SK-N-SH (cell line): ENCODE measurements at regions of chr16 and their contacts with region 1.

Region 1: DNA sequence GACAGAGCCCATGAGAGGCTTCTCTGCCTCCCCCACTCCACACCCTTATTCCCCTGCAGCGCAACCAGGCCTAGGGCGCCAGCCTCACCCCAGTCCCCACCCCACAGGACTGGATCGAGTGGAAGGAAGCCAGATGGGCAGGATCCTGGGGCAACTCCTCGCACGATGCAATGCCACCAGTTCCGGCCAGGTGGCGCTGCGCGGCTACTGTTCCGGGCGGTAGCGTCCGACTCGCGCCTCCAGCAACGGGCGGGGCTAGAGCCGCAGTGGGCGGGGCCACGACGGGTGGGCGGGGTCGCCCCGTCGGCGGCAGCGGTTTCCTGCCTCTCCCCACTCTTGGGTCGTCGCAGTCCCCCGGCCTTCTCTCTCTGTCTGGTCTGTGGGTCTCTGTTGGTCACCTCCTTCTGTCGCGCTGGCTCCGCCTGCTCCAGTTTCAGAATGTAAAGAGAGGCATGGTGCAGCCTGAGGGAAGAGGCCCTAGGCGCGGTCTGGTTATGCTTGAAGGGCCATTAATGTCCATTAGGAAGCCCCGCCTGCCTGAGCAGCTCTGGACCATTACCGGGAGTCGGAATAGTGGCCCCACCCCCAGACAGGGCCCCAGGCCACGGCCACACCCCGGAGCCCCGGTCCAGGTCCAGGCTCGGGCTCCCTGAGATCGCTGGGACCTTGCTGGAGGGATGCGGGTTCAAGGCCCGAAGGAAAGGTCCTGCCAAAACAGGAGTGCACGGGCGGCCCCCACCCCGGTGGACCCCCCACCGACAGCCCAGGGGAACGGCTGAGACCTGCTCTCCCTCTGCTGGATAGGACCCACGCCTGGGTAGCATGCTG is 3.4 kb upstream of the NHERF2 start:
- DNase-seq: peak; percentile 97
- H3K4me3 ChIP-seq: peak overlapping the region; percentile 40 to 65
- H3K27ac ChIP-seq: peak overlapping the region; percentile 65 to 86
- H3K4me1 ChIP-seq: peaks cover 6 to 28% of the 10 kb centered on the region in 2 experiments; a peak in 2 of 4 replicates
- H3K27me3 ChIP-seq: peaks cover 4% of the 10 kb centered on the region; the same call in 1 of the 2 replicates
- CTCF ChIP-seq: peak; percentile 89
- EP300 ChIP-seq: no peak
- RAD21 ChIP-seq: peak; percentile 94

Region 2: GRCh38 chr16:2009789-2010510 is 13.4 kb before region 1 on chr16 and contains the start of gene ZNF598:
- CTCF ChIA-PET with region 1: interaction called, 25 read pairs
- POLR2A ChIA-PET with region 1: no interaction called
- DNase-seq: peak; percentile 98
- H3K4me3 ChIP-seq: peak within 1 kb of the TSS; percentile 90 to 91
- H3K27ac ChIP-seq: peak within 1 kb of the TSS; percentile 81 to 87
- H3K4me1 ChIP-seq: peaks cover 18 to 46% of the 10 kb centered on the region in 2 experiments; a peak in 3 of 4 replicates
- H3K27me3 ChIP-seq: no peaks in the 10 kb centered on the region
- CTCF ChIP-seq: no peak
- EP300 ChIP-seq: no peak
- RAD21 ChIP-seq: no peak
- polyA plus RNA-seq, gene ZNF598: 38.1 and 47.8 TPM in 2 replicates

Region 3: GRCh38 chr16:2047330-2048115 is 24.2 kb after region 1 on chr16 and contains the starts of genes NTHL1 and TSC2:
- CTCF ChIA-PET with region 1: interaction called, 43 read pairs
- POLR2A ChIA-PET with region 1: interaction called, 5 read pairs
- DNase-seq: peak; percentile 97
- H3K4me3 ChIP-seq: peak within 1 kb of the TSS; percentile 71 to 76
- H3K27ac ChIP-seq: peak within 1 kb of the TSS; percentile 33 to 69; a peak in 3 of 4 replicates
- H3K4me1 ChIP-seq: peaks cover 4 to 20% of the 10 kb centered on the region in 2 experiments; a peak in 3 of 4 replicates
- H3K27me3 ChIP-seq: no peaks in the 10 kb centered on the region
- CTCF ChIP-seq: peak; percentile 28; the same call in 1 of the 2 replicates
- EP300 ChIP-seq: no peak; a peak in 1 of 4 replicates
- RAD21 ChIP-seq: no peak; the same call in 1 of the 2 replicates
- polyA plus RNA-seq, gene NTHL1: 72.9 and 77.3 TPM in 2 replicates
- polyA plus RNA-seq, gene TSC2: 76.7 and 96.1 TPM in 2 replicates

Region 4: GRCh38 chr16:2147981-2148671 is 124.8 kb after region 1 on chr16 and contains the start of gene RAB26:
- CTCF ChIA-PET with region 1: interaction called, 31 read pairs
- POLR2A ChIA-PET with region 1: interaction called, 4 read pairs
- DNase-seq: peak; percentile 91
- H3K4me3 ChIP-seq: peak within 1 kb of the TSS; percentile 50 to 60
- H3K27ac ChIP-seq: peak within 1 kb of the TSS; percentile 33 to 80; a peak in 3 of 4 replicates
- H3K4me1 ChIP-seq: peaks cover 41 to 62% of the 10 kb centered on the region in 2 experiments; a peak in 3 of 4 replicates
- H3K27me3 ChIP-seq: no peaks in the 10 kb centered on the region
- CTCF ChIP-seq: no peak
- EP300 ChIP-seq: no peak
- RAD21 ChIP-seq: no peak
- polyA plus RNA-seq, gene RAB26: 14.3 and 19.5 TPM in 2 replicates

Region 5: DNA sequence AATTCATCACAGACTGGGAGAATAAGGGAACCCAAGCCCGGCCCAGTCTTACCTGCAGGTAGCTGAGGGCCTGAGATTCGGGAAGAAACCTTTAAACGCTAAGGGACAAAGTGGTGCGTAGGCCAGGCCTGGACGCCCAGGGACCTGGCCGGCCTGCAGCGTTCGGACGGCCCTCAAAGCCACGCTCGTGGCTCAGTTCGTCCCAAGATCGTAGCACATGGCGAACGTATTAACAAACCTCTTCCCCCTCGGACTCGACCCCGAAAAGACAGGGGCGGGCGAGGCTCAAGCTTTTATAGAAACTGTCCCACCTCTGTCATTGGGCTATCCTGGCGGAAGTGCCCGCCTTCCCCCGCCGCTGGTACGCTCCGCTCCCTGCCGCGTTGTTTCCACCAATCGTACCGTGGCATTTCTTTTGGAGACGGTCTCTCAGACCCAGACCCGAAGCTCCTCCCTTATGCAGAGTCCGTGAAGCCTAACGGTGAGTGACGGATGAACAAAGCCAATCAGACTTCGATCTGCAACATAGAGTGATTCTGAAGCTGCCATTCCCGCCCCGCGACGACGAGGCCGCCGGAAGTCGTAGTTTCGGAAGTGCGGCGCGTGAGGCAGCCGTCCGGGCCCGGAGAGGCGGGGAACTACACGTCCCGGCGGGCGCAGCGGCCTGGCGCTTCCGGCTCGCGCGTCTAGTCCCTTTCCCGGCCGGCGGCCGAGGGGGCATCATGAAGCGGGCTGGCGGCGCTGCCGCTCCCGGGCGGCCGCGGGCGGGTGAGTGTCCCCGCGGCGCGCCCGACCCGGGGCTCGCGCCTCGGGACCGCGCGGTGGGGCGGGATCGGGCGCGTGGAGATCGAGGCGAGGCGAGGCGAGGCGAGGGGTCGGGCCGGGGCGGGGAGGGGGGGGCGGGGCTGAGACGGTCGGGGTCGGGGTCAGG is 132.0 kb after region 1 on chr16 and contains the start of gene TRAF7:
- CTCF ChIA-PET with region 1: interaction called, 28 read pairs
- POLR2A ChIA-PET with region 1: interaction called, 10 read pairs
- DNase-seq: peak; percentile 96
- H3K4me3 ChIP-seq: peak within 1 kb of the TSS; percentile 100
- H3K27ac ChIP-seq: peak within 1 kb of the TSS; percentile 61 to 89; a peak in 3 of 4 replicates
- H3K4me1 ChIP-seq: peaks cover 37 to 67% of the 10 kb centered on the region in 2 experiments; a peak in 3 of 4 replicates
- H3K27me3 ChIP-seq: no peaks in the 10 kb centered on the region
- CTCF ChIP-seq: no peak
- EP300 ChIP-seq: peak in 1 of 2 experiments; percentile 26; a peak in 1 of 4 replicates
- RAD21 ChIP-seq: no peak
- polyA plus RNA-seq, gene TRAF7: 69.9 and 73.0 TPM in 2 replicates